ENCODE measurements at regions of chr13 and their contacts with region 1.

Region 1: DNA sequence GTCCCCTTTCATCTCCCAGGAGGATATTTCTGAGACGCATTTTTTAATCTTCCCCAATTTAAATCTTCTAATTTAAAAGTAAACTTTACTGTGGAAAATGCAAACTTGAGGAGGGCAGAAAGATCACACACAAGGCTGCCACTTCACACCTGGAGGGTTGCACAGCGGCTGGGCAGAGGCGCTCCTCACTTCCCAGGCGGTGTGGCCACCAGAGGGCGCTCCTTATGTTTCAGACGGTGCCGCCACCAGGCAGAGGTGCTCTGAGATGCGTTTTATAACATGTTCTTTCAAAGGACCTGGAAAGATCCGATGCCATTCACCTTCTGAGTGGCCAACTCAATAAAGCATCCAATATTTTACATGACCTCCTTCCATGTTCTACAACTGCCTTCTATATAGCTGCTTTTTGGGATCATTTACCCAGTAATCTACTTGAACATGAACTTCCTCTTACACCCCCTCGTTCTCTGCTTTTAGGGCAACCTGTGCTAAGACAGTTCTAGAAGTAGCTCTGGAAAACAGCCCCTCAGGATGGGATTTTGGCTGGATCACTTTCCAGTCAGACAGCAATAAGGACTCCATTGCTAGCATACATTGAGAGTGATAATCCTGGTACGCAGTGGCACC is 14.8 kb upstream of the MTUS2 start:
- DNase-seq: peak; percentile 49
- ATAC-seq: no peak

Region 2: GRCh38 chr13:28636674-28637317 is 168.5 kb before region 1 on chr13:
- intact Hi-C with region 1: no loop called
- DNase-seq: peak; percentile 50
- ATAC-seq: peak; percentile 88 to 90

Region 3: GRCh38 chr13:28885181-28885580 is 79.9 kb after region 1 on chr13:
- intact Hi-C with region 1: no loop called
- DNase-seq: no peak
- ATAC-seq: no peak

Region 4: DNA sequence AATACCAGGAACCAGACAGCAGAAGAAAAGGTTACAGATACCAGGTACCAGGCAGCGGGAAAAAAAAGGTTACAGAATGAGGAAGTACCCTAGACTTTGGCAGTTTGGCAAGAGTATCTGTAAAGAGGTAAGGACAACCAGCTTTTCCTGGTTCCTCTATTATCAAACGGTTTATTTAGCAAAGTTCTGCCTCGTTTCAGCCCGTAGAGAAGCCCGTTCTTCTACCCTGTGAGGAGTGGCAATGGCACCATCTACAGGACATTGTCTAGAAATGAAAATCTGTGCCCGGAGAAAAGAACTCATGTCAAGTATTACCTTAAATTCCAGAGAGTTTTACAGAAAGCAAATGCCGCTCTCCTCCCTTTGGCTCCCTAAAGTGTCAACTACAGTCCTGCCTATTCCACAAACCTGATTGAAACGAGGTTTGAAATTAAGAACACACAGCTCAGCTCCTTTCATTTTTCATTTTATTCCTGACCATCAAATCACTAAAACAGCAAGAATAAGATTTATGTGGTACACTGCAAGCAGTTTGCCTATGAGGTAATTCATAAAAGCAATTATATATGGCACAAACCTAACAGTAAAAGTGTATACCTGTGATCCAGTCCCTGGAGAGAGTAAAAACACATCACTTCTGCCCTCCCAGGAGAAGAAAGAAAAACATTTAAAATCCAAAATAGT is 563.9 kb after region 1 on chr13:
- intact Hi-C with region 1: loop called (anchors 5 to 10 kb)
- DNase-seq: no peak
- ATAC-seq: peak; percentile 34 to 55

Measured in left cardiac atrium (tissue), 4 donors.